SK-N-SH (cell line): ENCODE measurements at regions of chr10 and their contacts with region 1.

Region 1: DNA sequence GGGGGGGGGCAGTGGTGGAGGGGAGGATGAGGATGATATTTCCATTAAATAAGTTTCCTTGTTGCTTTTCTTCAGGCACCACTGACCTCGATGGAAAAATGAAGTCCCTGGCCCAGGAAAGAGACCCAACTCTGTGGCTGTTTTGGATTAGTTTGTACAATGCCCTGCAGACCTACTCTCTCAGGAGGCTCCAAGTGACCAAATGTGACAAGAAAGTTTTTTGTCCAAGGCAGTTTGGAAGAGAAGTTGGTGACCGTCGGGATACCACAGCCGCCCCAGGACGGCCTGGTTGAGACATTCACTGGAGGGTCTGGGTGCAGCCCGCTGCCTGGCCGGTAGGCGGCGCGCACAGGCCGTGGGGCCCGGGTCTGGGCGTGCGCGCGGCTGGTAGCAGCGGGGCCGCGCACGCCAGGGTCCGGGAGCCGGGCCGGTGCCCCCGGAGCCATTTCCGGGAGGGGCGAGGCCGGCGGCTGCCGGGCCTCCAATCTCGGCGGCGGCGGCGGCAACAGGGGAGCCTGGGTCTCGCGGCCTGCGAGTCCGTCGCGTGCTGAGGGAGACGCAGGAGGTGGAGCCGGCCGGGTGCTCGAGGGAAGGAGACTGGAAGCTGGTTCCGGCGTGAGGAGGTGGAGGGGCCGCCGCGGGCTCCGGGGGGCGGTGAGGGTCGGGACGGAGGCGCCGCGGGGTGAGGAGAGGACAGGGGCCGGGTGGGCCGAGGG is at the start of gene SGPL1:
- DNase-seq: peak; percentile 99
- H3K4me3 ChIP-seq: peak within 1 kb of the TSS; percentile 66 to 89
- H3K27ac ChIP-seq: peak within 1 kb of the TSS; percentile 92 to 96
- H3K4me1 ChIP-seq: peaks cover 5 to 11% of the 10 kb centered on the region in 2 experiments; a peak in 3 of 4 replicates
- H3K27me3 ChIP-seq: no peaks in the 10 kb centered on the region
- CTCF ChIP-seq: peak; percentile 85
- EP300 ChIP-seq: no peak
- RAD21 ChIP-seq: peak; percentile 89
- polyA plus RNA-seq, gene SGPL1: 11.8 and 15.6 TPM in 2 replicates

Region 2: GRCh38 chr10:70843776-70844489 is 28.3 kb after region 1 on chr10:
- CTCF ChIA-PET with region 1: no interaction called
- POLR2A ChIA-PET with region 1: no interaction called
- DNase-seq: no peak
- H3K4me3 ChIP-seq: no peak overlapping the region
- H3K27ac ChIP-seq: no peak overlapping the region; a peak in 1 of 4 replicates
- H3K4me1 ChIP-seq: peaks cover 5 to 20% of the 10 kb centered on the region in 2 experiments
- H3K27me3 ChIP-seq: no peaks in the 10 kb centered on the region
- CTCF ChIP-seq: no peak
- EP300 ChIP-seq: no peak
- RAD21 ChIP-seq: no peak

Region 3: GRCh38 chr10:70872291-70872690 is 56.6 kb after region 1 on chr10:
- CTCF ChIA-PET with region 1: interaction called, 84 read pairs
- POLR2A ChIA-PET with region 1: interaction called, 3 read pairs
- DNase-seq: no peak
- H3K4me3 ChIP-seq: no peak overlapping the region
- H3K27ac ChIP-seq: peak overlapping the region in 1 of 2 experiments; percentile 74; a peak in 2 of 4 replicates
- H3K4me1 ChIP-seq: peaks cover 0 to 26% of the 10 kb centered on the region in 2 experiments; a peak in 2 of 4 replicates
- H3K27me3 ChIP-seq: no peaks in the 10 kb centered on the region
- CTCF ChIP-seq: no peak
- EP300 ChIP-seq: no peak
- RAD21 ChIP-seq: no peak

Region 4: DNA sequence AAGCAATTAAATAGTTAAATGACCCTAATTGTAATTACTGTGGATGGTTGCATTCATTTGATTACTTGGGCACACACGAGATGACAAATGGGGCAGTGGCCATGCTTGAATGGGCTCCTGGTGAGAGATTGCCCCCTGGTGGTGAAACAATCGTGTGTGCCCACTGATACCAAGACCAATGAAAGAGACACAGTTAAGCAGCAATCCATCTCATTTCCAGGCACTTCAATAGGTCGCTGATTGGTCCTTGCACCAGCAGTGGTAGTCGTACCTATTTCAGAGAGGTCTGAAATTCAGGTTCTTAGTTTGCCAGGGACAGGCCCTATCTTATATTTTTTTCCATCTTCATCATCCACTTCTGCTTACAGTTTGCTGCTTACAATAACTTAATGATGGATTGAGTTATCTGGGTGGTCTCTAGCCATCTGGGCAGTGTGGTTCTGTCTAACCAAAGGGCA is 64.4 kb after region 1 on chr10:
- CTCF ChIA-PET with region 1: interaction called, 84 read pairs
- POLR2A ChIA-PET with region 1: interaction called, 12 read pairs
- DNase-seq: peak; percentile 80
- H3K4me3 ChIP-seq: no peak overlapping the region; a peak in 1 of 4 replicates
- H3K27ac ChIP-seq: peak overlapping the region in 1 of 2 experiments; percentile 58; a peak in 2 of 4 replicates
- H3K4me1 ChIP-seq: peaks cover 0 to 26% of the 10 kb centered on the region in 2 experiments; a peak in 2 of 4 replicates
- H3K27me3 ChIP-seq: no peaks in the 10 kb centered on the region
- CTCF ChIP-seq: peak; percentile 95
- EP300 ChIP-seq: no peak
- RAD21 ChIP-seq: peak; percentile 98

Region 5: DNA sequence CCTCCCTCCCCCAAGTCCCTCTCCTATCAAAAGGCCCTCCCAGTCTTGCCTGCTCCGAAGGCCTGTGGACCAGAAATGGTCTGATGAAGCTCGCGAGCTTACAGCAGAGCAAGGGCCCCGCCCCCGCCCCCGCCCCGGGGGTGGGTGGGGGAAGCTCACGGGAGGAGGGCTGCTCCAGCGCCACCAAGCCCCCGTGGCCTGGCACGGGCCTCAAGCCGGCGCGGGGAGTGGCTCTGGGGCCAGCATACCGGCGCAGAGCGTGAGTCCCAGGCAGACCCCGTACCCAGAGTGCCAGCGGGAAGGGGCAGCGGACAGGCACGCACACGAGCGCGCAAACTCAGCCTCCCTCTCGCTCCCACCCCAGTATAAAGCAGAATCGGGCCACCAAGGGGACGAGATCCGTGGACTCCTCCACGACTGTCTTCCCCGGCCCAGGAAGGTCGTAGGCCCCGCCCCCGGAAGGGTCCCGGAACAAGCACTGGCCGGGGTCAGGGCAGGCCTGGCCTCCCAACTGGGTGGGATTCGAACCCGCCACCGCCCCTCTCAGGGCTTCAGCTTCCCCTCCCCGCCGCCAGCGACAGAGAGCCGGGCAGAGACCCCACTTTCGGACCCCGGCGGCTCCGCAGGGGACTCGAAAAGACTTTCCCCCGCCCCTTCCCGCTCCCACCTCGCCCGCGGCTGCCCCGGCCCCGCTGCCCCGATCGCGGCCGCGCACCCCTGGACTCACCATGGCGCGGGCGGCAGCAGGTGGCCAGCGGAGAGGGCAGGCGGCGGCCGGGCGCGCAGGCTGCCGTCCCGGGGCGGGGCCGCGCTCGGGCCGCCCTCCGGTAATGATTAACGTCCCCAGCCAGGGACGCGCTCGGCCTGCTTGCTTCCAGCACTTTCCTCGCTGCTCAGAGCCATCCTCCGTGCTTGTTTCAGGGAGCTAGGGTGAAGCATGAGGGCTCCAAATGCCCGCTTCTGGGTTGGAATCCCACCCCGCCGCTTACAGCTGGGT is 72.4 kb after region 1 on chr10 and contains the start of gene PCBD1:
- CTCF ChIA-PET with region 1: interaction called, 14 read pairs
- POLR2A ChIA-PET with region 1: interaction called, 10 read pairs
- DNase-seq: peak; percentile 88
- H3K4me3 ChIP-seq: peak within 1 kb of the TSS; percentile 72 to 76
- H3K27ac ChIP-seq: peak within 1 kb of the TSS; percentile 57 to 96; a peak in 3 of 4 replicates
- H3K4me1 ChIP-seq: peaks cover 6 to 47% of the 10 kb centered on the region in 2 experiments; a peak in 2 of 4 replicates
- H3K27me3 ChIP-seq: no peaks in the 10 kb centered on the region
- CTCF ChIP-seq: no peak
- EP300 ChIP-seq: no peak
- RAD21 ChIP-seq: no peak
- polyA plus RNA-seq, gene PCBD1: 95.9 and 112 TPM in 2 replicates

Region 6: GRCh38 chr10:70967596-70968587 is 152.2 kb after region 1 on chr10:
- CTCF ChIA-PET with region 1: no interaction called
- POLR2A ChIA-PET with region 1: no interaction called
- DNase-seq: no peak
- H3K4me3 ChIP-seq: no peak overlapping the region
- H3K27ac ChIP-seq: no peak overlapping the region
- H3K4me1 ChIP-seq: peaks cover 0 to 7% of the 10 kb centered on the region in 2 experiments; a peak in 1 of 4 replicates
- H3K27me3 ChIP-seq: no peaks in the 10 kb centered on the region
- CTCF ChIP-seq: no peak
- EP300 ChIP-seq: no peak
- RAD21 ChIP-seq: no peak